ENCODE measurements at regions of chr7 and their contacts with region 1.

Region 1: GRCh38 chr7:110442381-110442837 is 648.5 kb upstream of the LRRN3 start:
- DNase-seq: peak; percentile 62 to 71
- H3K4me3 ChIP-seq: no peak overlapping the region
- H3K4me3 Mint-ChIP-seq: no peak overlapping the region
- H3K27ac Mint-ChIP-seq: no peak overlapping the region
- H3K4me1 ChIP-seq: no peaks in the 10 kb centered on the region
- H3K4me1 Mint-ChIP-seq: no peaks in the 10 kb centered on the region
- H3K27me3 ChIP-seq: no peaks in the 10 kb centered on the region
- H3K27me3 Mint-ChIP-seq: no peaks in the 10 kb centered on the region
- CTCF ChIP-seq: peak; percentile 61 to 65

Region 2: DNA sequence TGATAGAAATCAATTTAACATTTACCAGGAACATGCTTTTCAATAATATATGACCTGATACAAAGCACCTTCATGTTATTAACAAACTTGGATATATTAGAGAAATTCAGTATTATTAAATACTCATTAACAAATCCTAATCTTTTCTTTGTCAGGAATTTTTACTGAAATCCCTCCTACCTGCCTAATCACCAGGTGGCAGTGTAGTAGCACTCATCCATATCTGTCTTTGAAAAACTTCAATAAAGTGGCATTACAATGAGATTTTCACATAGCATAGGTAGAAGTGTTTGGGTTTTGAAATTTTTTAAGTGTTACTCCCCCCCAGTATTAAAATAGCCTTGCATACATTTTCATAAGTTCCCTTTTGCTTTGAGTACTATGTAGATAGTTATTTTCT is 598.0 kb before region 1 on chr7:
- CTCF ChIA-PET with region 1: no interaction called
- POLR2A ChIA-PET with region 1: no interaction called
- intact Hi-C with region 1: loop called (anchors 2 kb)
- DNase-seq: peak in 1 of 2 experiments; percentile 37
- H3K4me3 ChIP-seq: no peak overlapping the region
- H3K4me3 Mint-ChIP-seq: no peak overlapping the region
- H3K27ac Mint-ChIP-seq: no peak overlapping the region
- H3K4me1 ChIP-seq: no peaks in the 10 kb centered on the region
- H3K4me1 Mint-ChIP-seq: no peaks in the 10 kb centered on the region
- H3K27me3 ChIP-seq: no peaks in the 10 kb centered on the region
- H3K27me3 Mint-ChIP-seq: peaks cover 5% of the 10 kb centered on the region
- CTCF ChIP-seq: peak; percentile 62 to 71

Region 3: GRCh38 chr7:110090110-110090769 is 352.2 kb before region 1 on chr7:
- CTCF ChIA-PET with region 1: no interaction called
- POLR2A ChIA-PET with region 1: no interaction called
- intact Hi-C with region 1: loop called (anchors 1 kb)
- DNase-seq: peak in 1 of 2 experiments; percentile 52
- H3K4me3 ChIP-seq: no peak overlapping the region
- H3K4me3 Mint-ChIP-seq: no peak overlapping the region
- H3K27ac Mint-ChIP-seq: no peak overlapping the region
- H3K4me1 ChIP-seq: no peaks in the 10 kb centered on the region
- H3K4me1 Mint-ChIP-seq: no peaks in the 10 kb centered on the region
- H3K27me3 ChIP-seq: no peaks in the 10 kb centered on the region
- H3K27me3 Mint-ChIP-seq: peaks cover 2% of the 10 kb centered on the region
- CTCF ChIP-seq: peak; percentile 65 to 66

Region 4: GRCh38 chr7:110204527-110204926 is 237.9 kb before region 1 on chr7:
- CTCF ChIA-PET with region 1: interaction called, 4 read pairs
- POLR2A ChIA-PET with region 1: no interaction called
- intact Hi-C with region 1: loop called (anchors 1 kb)
- DNase-seq: peak; percentile 42 to 51
- H3K4me3 ChIP-seq: no peak overlapping the region
- H3K4me3 Mint-ChIP-seq: no peak overlapping the region
- H3K27ac Mint-ChIP-seq: no peak overlapping the region
- H3K4me1 ChIP-seq: no peaks in the 10 kb centered on the region
- H3K4me1 Mint-ChIP-seq: no peaks in the 10 kb centered on the region
- H3K27me3 ChIP-seq: no peaks in the 10 kb centered on the region
- H3K27me3 Mint-ChIP-seq: peaks cover 13% of the 10 kb centered on the region
- CTCF ChIP-seq: peak in 1 of 2 experiments; percentile 56

Region 5: DNA sequence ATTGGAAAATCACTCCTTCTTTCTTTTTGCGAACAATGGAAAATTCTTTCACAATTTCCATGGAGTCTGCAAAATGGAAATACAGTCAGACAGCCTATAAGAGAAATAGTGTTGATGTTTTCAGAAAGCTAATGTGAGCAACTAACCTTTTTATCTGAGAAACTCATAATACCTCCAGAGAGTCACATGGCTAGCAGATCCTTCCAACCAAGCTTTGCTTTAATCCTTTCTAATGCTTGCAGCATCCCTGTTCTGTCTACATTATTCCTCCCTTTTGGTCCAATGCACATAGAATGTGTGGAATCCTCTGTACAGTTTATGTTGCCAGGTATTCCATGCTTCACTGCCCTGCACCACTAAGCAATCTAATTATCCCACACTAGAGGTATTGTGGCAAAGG is 69.0 kb before region 1 on chr7:
- CTCF ChIA-PET with region 1: no interaction called
- POLR2A ChIA-PET with region 1: no interaction called
- intact Hi-C with region 1: loop called (anchors 1 kb)
- DNase-seq: no peak
- H3K4me3 ChIP-seq: no peak overlapping the region
- H3K4me3 Mint-ChIP-seq: no peak overlapping the region
- H3K27ac Mint-ChIP-seq: peak overlapping the region; percentile 70
- H3K4me1 ChIP-seq: peaks cover 17% of the 10 kb centered on the region
- H3K4me1 Mint-ChIP-seq: peaks cover 18% of the 10 kb centered on the region
- H3K27me3 ChIP-seq: no peaks in the 10 kb centered on the region
- H3K27me3 Mint-ChIP-seq: no peaks in the 10 kb centered on the region
- CTCF ChIP-seq: no peak

Measured in Caco-2 (cell line).